H1 (cell line): ENCODE measurements at regions of chr9 and their contacts with region 1.

Region 1: DNA sequence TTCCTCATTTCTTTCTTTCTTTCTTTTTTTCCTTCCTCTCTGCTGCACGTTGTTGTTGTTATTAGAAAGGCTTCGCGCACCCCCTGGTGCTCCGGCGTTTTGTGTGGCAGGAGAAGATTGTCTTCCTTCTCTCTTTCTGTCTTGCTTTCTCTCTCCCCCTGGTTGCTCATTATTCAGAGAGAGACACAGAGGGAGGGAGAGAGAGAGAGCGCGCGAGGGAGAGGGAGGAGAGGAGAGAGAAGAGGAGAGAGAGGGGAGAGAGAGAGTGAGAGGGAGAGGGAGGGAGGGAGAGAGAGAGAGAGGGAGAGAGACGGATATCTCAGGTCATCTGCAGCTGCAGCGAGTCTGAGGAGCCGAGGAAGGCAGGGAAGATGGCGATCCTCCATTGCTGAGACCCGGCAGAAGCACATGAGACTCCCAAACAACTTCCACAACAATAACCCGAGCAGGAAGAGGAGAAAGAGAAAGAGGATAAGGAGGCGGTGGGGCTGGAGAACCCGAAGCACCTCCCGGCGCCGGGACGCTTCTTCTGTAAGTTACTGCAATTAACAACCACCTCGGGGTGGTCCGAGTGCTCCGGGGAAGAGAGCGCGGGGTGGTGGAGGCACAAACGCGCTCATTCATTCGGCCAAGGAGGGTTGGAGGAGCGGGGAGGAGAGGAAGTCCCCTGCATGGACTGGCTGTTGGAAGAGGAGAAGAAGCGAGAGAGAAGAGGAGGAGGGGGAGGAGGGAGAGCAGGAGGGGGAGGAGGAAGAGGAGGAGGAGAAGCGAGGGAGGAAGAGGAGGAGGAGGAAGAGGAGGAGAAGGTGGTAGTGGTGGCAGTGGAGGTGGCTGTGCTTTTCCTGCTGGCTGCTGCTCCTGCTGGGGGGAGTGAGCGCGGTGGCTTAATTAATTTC is at the start of gene ZNF462:
- DNase-seq: peak in 1 of 2 experiments; percentile 56
- H3K4me3 ChIP-seq: peak within 1 kb of the TSS; percentile 77 to 98 (median 87)
- H3K27ac ChIP-seq: peak within 1 kb of the TSS; percentile 82
- H3K4me1 ChIP-seq: peaks cover 0 to 12% (median 4%) of the 10 kb centered on the region in 4 experiments; a peak in 4 of 7 replicates
- H3K27me3 ChIP-seq: no peaks in the 10 kb centered on the region
- CTCF ChIP-seq: no peak
- EP300 ChIP-seq: peak in 1 of 2 experiments; percentile 48; a peak in 1 of 3 replicates
- POLR2A ChIP-seq: peak; percentile 37 to 72; a peak in 2 of 3 replicates
- RAD21 ChIP-seq: no peak; a peak in 2 of 4 replicates
- total RNA-seq, gene ZNF462: 154 and 163 TPM in 2 replicates

Region 2: DNA sequence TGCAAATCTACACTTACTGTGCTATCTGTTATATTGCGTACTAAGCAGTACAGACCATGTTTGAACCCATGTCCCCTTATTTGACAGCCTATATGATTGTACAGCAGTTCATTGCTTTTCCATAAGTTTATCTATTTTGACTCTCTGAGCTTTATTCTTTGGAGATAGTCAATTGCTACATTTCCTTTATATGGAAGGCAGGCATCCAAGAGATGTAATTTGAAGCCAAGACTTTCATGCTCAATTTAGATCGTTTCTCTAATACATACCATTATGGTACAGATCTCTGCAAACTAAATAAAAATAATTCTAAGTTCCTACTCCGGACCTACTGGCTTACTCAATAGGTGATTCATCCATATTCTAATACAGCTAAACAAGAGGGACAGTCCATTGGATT is 743.9 kb before region 1 on chr9:
- CTCF ChIA-PET with region 1: no interaction called
- POLR2A ChIA-PET with region 1: no interaction called
- DNase-seq: no peak
- H3K4me3 ChIP-seq: no peak overlapping the region
- H3K27ac ChIP-seq: no peak overlapping the region
- H3K4me1 ChIP-seq: no peaks in the 10 kb centered on the region
- H3K27me3 ChIP-seq: no peaks in the 10 kb centered on the region
- CTCF ChIP-seq: no peak
- EP300 ChIP-seq: no peak
- POLR2A ChIP-seq: no peak
- RAD21 ChIP-seq: no peak

Region 3: GRCh38 chr9:106878924-106879323 is 15.9 kb after region 1 on chr9:
- CTCF ChIA-PET with region 1: interaction called, 4 read pairs
- POLR2A ChIA-PET with region 1: interaction called, 64 read pairs
- DNase-seq: no peak
- H3K4me3 ChIP-seq: peak overlapping the region in 2 of 4 experiments; percentile 11 to 49; a peak in 3 of 8 replicates
- H3K27ac ChIP-seq: no peak overlapping the region
- H3K4me1 ChIP-seq: peaks cover 20 to 45% (median 36%) of the 10 kb centered on the region in 4 experiments
- H3K27me3 ChIP-seq: no peaks in the 10 kb centered on the region
- CTCF ChIP-seq: no peak
- EP300 ChIP-seq: no peak
- POLR2A ChIP-seq: no peak
- RAD21 ChIP-seq: no peak

Region 4: GRCh38 chr9:106892632-106893031 is 29.6 kb after region 1 on chr9:
- CTCF ChIA-PET with region 1: interaction called, 3 read pairs
- POLR2A ChIA-PET with region 1: interaction called, 60 read pairs
- DNase-seq: peak in 1 of 2 experiments; percentile 83
- H3K4me3 ChIP-seq: peak overlapping the region in 1 of 4 experiments; percentile 5; a peak in 1 of 8 replicates
- H3K27ac ChIP-seq: peak overlapping the region; percentile 29; the same call in 1 of the 2 replicates
- H3K4me1 ChIP-seq: peaks cover 4 to 35% (median 23%) of the 10 kb centered on the region in 4 experiments
- H3K27me3 ChIP-seq: no peaks in the 10 kb centered on the region
- CTCF ChIP-seq: no peak
- EP300 ChIP-seq: no peak
- POLR2A ChIP-seq: no peak
- RAD21 ChIP-seq: no peak

Region 5: GRCh38 chr9:106934442-106935238 is 71.6 kb after region 1 on chr9:
- CTCF ChIA-PET with region 1: no interaction called
- POLR2A ChIA-PET with region 1: interaction called, 10 read pairs
- DNase-seq: no peak
- H3K4me3 ChIP-seq: peak overlapping the region in 1 of 4 experiments; percentile 34; a peak in 1 of 8 replicates
- H3K27ac ChIP-seq: no peak overlapping the region
- H3K4me1 ChIP-seq: peaks cover 2 to 7% (median 4%) of the 10 kb centered on the region in 4 experiments; a peak in 6 of 7 replicates
- H3K27me3 ChIP-seq: no peaks in the 10 kb centered on the region
- CTCF ChIP-seq: no peak
- EP300 ChIP-seq: no peak
- POLR2A ChIP-seq: 0 out of 3 replicates have a peak, but pooled peaks of 1 of the 2 experiments have one; percentile 23
- RAD21 ChIP-seq: no peak